PC-3 (cell line): ENCODE measurements at regions of chr5 and their contacts with region 1.

Region 1: GRCh38 chr5:132829742-132830435 is 558 bp downstream of the SHROOM1 start:
- DNase-seq: peak; percentile 64
- ATAC-seq: peak; percentile 82
- H3K4me3 ChIP-seq: peak overlapping the region; percentile 95
- H3K27ac ChIP-seq: no peak overlapping the region
- H3K4me1 ChIP-seq: peaks cover 5% of the 10 kb centered on the region
- H3K27me3 ChIP-seq: no peaks in the 10 kb centered on the region
- CTCF ChIP-seq: peak; percentile 67

Region 2: DNA sequence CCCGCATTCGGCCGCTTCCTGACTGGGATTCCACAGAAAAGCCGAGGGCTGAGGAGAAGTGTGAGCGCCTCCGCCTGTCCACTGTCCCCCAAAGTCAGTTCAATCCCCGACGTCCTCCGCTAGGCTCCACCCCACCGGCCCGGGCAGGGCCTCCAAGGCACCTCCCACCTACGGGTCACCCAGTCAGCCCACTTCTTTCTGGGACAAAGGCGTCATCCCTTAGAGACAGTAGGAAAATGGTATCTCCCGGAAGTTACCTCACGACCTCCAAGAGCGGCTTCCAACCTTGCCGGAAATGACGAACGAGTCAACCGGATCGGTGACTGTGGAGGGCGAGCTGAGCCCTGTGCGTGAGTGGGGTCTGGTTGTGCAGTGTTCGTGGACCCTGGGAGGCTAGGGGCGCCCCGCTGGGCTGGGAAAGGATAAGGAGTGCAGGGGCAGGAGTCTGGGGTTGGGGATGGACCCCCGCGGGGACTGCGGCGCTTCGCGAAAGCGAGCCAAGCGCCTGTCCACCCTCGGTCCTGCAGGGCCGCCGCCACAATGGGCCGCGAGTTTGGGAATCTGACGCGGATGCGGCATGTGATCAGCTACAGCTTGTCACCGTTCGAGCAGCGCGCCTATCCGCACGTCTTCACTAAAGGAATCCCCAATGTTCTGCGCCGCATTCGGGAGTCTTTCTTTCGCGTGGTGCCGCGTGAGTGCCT is 36.6 kb after region 1 on chr5 and contains the starts of genes GDF9 and UQCRQ:
- CTCF ChIA-PET with region 1: interaction called, 3 read pairs
- POLR2A ChIA-PET with region 1: no interaction called
- intact Hi-C with region 1: loop called (anchors 1 kb)
- DNase-seq: peak; percentile 97
- ATAC-seq: peak; percentile 98
- H3K4me3 ChIP-seq: peak within 1 kb of the TSS; percentile 96
- H3K27ac ChIP-seq: peak within 1 kb of the TSS; percentile 55
- H3K4me1 ChIP-seq: peaks cover 15% of the 10 kb centered on the region
- H3K27me3 ChIP-seq: no peaks in the 10 kb centered on the region
- CTCF ChIP-seq: peak; percentile 35; the same call in 1 of the 2 replicates
- total RNA-seq, gene GDF9: not detected in 2 replicates
- total RNA-seq, gene UQCRQ: 190 and 198 TPM in 2 replicates

Region 3: GRCh38 chr5:132883261-132883834 is 53.5 kb after region 1 on chr5:
- CTCF ChIA-PET with region 1: interaction called, 4 read pairs
- POLR2A ChIA-PET with region 1: no interaction called
- intact Hi-C with region 1: loop called (anchors 1 kb)
- DNase-seq: peak; percentile 63
- ATAC-seq: peak; percentile 95
- H3K4me3 ChIP-seq: no peak overlapping the region
- H3K27ac ChIP-seq: no peak overlapping the region
- H3K4me1 ChIP-seq: no peaks in the 10 kb centered on the region
- H3K27me3 ChIP-seq: no peaks in the 10 kb centered on the region
- CTCF ChIP-seq: peak; percentile 67